Cardiac septum (tissue), 1 donor: ENCODE measurements at regions of chr4 and their contacts with region 1.

Region 1: GRCh38 chr4:82428969-82429727 is 1.1 kb downstream of the HNRNPDL start:
- DNase-seq: peak; percentile 97

Region 2: DNA sequence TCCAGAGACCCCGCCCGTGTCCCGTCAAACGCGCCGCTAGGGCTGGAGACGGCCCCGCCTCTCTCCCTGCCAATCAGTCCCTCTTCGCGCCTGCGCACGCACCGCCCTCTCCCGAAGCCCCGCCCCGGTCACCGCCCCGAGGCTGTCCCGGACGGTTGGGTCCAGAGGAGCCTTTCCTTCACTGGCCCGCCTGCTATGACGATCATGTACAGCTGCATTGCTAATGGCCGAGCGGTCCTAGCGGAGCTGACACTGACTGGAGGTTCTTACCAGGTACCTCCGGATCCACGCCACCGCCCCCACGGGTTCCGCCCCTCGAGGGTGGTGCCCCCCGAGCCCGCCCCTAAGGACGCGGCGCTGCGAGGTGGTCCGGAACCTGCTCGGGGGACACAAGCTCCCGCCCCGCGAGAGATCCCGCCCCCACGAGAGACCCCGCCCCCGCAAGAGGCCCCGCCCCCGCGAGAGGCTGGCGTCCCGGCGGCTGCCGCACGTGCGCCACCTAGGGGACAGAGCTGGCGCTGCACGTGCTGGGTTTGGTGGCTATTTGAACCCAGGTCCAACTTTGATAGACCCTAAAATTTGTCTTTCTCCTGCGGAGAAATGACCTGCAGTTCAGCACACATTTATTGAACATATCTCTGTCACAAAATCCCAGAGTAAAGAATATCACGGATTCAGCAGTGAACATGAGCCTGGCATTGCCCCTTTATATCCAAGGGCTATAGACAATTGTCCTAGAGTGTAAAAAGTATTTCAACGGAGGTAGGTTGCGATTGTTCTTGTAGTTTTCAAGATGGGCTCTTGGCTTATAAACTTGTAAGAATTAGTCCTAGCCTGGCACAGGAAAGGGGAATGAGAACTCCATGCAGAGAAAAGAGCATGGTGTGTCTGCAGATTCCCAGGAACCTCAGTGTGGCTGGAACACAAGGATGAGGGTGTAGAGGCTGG is 144.0 kb before region 1 on chr4:
- intact Hi-C with region 1: loop called (anchors 2 kb)
- DNase-seq: peak; percentile 100

Region 3: GRCh38 chr4:82473621-82474164 is 44.5 kb after region 1 on chr4:
- intact Hi-C with region 1: no loop called
- DNase-seq: no peak